Endothelial cell of umbilical vein (primary cell): ENCODE measurements at regions of chr14 and their contacts with region 1.

Region 1: DNA sequence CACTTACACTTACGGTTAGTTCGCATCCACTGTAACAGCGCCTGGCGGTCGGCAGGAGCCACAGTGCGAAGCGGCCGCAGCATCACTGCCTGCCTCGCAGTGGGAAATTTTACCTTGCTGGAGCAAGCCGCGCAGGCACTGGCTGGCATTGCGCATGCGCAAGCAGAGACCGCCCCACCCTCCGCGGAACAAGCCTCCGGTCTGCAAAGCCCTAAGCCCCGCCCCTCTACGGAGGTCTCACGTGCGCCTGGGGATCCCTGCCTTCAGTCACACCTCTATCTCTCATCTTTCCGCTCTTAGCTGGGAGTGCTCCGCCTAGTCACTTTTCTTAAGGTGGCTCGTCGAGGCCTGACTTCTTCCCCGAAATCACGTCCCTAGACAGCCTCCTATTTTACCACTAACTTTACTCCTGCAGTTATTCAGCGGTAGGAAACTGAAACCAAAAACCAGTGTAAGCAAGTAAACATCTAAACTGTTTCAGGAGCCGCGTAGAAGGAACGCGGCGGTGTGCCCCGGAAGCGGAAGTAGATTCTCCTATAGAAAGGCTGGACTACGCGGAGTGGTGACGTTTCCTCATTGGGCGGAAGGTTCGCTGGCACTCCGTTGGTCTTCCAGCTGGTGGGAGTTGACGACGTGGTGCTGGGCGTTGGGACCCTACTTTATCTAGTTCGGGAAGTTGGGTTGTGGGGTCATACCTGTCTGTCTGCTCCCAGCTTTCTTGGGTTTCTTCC is at the start of gene SRP54:
- DNase-seq: peak; percentile 98
- H3K4me3 ChIP-seq: peak within 1 kb of the TSS; percentile 71 to 91 (median 85)
- H3K27ac ChIP-seq: peak within 1 kb of the TSS; percentile 94
- H3K4me1 ChIP-seq: peaks cover 15% of the 10 kb centered on the region
- H3K27me3 ChIP-seq: no peaks in the 10 kb centered on the region
- CTCF ChIP-seq: peak in 1 of 2 donors; percentile 50
- POLR2A ChIP-seq: peak; percentile 91
- total RNA-seq, gene SRP54: 60.7 and 63.7 TPM in 2 replicates

Region 2: GRCh38 chr14:34714320-34715126 is 268.1 kb before region 1 on chr14 and contains the start of gene CFL2:
- CTCF ChIA-PET with region 1: no interaction called
- POLR2A ChIA-PET with region 1: no interaction called
- dilution Hi-C with region 1: no loop called
- intact Hi-C with region 1: loop called (anchors 5 kb)
- DNase-seq: peak; percentile 81
- H3K4me3 ChIP-seq: peak within 1 kb of the TSS; percentile 60 to 95 (median 82)
- H3K27ac ChIP-seq: peak within 1 kb of the TSS; percentile 84
- H3K4me1 ChIP-seq: peaks cover 23% of the 10 kb centered on the region
- H3K27me3 ChIP-seq: no peaks in the 10 kb centered on the region
- CTCF ChIP-seq: no peak
- POLR2A ChIP-seq: peak; percentile 69
- total RNA-seq, gene CFL2: 91.9 and 98.1 TPM in 2 replicates

Region 3: GRCh38 chr14:34875031-34875922 is 107.3 kb before region 1 on chr14 and contains the start of gene BAZ1A:
- CTCF ChIA-PET with region 1: interaction called, 12 read pairs
- POLR2A ChIA-PET with region 1: interaction called, 4 read pairs
- dilution Hi-C with region 1: no loop called
- intact Hi-C with region 1: loop called (anchors 1 kb)
- DNase-seq: peak; percentile 90
- H3K4me3 ChIP-seq: peak within 1 kb of the TSS; percentile 78 to 85 (median 80)
- H3K27ac ChIP-seq: peak within 1 kb of the TSS; percentile 84
- H3K4me1 ChIP-seq: peaks cover 14% of the 10 kb centered on the region
- H3K27me3 ChIP-seq: no peaks in the 10 kb centered on the region
- CTCF ChIP-seq: no peak
- POLR2A ChIP-seq: peak; percentile 95
- total RNA-seq, gene BAZ1A: 49.1 and 52.1 TPM in 2 replicates

Region 4: GRCh38 chr14:35046048-35046741 is 63.6 kb after region 1 on chr14 and contains the start of gene FAM177A1:
- CTCF ChIA-PET with region 1: interaction called, 6 read pairs
- POLR2A ChIA-PET with region 1: interaction called, 5 read pairs
- dilution Hi-C with region 1: no loop called
- intact Hi-C with region 1: loop called (anchors 1 kb)
- DNase-seq: peak; percentile 98
- H3K4me3 ChIP-seq: peak within 1 kb of the TSS; percentile 69 to 91 (median 74)
- H3K27ac ChIP-seq: peak within 1 kb of the TSS; percentile 94
- H3K4me1 ChIP-seq: peaks cover 21% of the 10 kb centered on the region
- H3K27me3 ChIP-seq: no peaks in the 10 kb centered on the region
- CTCF ChIP-seq: peak in 1 of 2 donors; percentile 3
- POLR2A ChIP-seq: peak; percentile 61
- total RNA-seq, gene FAM177A1: 48.2 and 64.1 TPM in 2 replicates